OCI-LY7 (cell line): ENCODE measurements at regions of chr2 and their contacts with region 1.

Region 1: GRCh38 chr2:19955544-19956422 is 34.1 kb downstream of the WDR35 start:
- DNase-seq: peak; percentile 72
- H3K4me3 ChIP-seq: no peak overlapping the region
- H3K27ac ChIP-seq: no peak overlapping the region
- H3K4me1 ChIP-seq: no peaks in the 10 kb centered on the region
- CTCF ChIP-seq: peak; percentile 92

Region 2: DNA sequence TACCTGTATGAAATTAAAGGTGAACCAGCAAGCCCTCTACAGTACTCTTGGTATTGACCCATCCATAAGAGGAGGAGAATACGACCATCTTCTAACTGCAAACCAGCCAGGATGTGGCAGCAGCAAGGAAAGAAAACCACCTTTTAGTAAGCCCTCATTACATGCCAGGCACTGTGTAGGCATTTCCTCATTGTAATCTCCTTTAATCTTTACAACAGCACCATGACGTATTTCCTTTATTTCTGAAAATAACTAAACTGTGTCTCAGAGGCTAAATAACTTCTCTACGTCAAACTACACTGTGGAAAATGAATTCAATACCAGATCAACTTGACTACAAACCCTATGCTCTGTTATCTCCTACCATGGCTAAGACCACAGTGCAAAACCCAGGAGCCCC is 15.9 kb after region 1 on chr2:
- CTCF ChIA-PET with region 1: no interaction called
- POLR2A ChIA-PET with region 1: no interaction called
- intact Hi-C with region 1: no loop called
- DNase-seq: no peak
- H3K4me3 ChIP-seq: no peak overlapping the region
- H3K27ac ChIP-seq: no peak overlapping the region
- H3K4me1 ChIP-seq: no peaks in the 10 kb centered on the region
- CTCF ChIP-seq: no peak

Region 3: GRCh38 chr2:20015472-20016083 is 59.8 kb after region 1 on chr2:
- CTCF ChIA-PET with region 1: no interaction called
- POLR2A ChIA-PET with region 1: no interaction called
- intact Hi-C with region 1: loop called (anchors 5 kb)
- DNase-seq: peak; percentile 57
- H3K4me3 ChIP-seq: no peak overlapping the region
- H3K27ac ChIP-seq: no peak overlapping the region
- H3K4me1 ChIP-seq: no peaks in the 10 kb centered on the region
- CTCF ChIP-seq: peak; percentile 80

Region 4: GRCh38 chr2:20097879-20098714 is 142.3 kb after region 1 on chr2:
- CTCF ChIA-PET with region 1: no interaction called
- POLR2A ChIA-PET with region 1: interaction called, 3 read pairs
- intact Hi-C with region 1: loop called (anchors 1 kb)
- DNase-seq: peak; percentile 80
- H3K4me3 ChIP-seq: no peak overlapping the region
- H3K27ac ChIP-seq: no peak overlapping the region
- H3K4me1 ChIP-seq: no peaks in the 10 kb centered on the region
- CTCF ChIP-seq: peak; percentile 90